Upper lobe of right lung (tissue), 1 donor: ENCODE measurements at regions of chr20 and their contacts with region 1.

Region 1: DNA sequence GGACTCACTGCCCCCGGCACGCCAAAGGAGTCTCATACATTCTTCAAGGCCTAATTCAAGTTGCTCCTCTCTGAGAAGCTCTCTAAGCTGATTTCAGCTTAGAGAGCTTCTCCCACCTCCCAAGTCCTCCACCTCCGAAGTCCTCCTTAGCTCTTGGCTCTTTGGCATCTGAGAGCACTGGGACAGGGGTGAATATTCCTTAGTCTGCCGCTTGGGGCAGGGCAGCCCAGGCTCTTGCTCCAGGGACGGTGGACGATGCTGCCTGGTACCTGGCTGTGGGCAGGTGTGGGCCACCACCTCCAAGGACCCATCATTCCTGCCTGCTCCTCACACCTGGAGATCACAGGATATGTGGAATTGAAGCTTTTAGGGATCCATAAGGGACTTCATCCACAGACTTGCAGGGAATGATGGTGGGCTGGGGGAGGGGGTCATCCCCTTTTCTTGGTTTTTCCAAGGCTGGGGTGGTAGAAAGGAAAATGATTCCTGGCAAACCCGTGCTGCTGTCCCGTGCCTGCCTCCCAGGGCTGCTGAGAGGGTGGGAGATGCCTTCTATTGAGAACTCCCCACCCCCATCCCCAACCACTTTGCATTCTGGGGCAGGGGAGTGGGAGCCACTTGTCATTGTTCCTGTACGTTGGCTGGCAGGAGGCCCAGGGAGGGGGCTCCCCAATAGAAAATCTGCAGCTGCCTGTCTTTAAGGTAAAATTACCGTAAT is 57.4 kb downstream of the ARHGAP40 start:
- DNase-seq: no peak
- ATAC-seq: peak; percentile 73
- H3K4me3 ChIP-seq: no peak overlapping the region
- H3K27ac ChIP-seq: no peak overlapping the region
- H3K4me1 ChIP-seq: no peaks in the 10 kb centered on the region
- H3K27me3 ChIP-seq: peaks cover 41% of the 10 kb centered on the region
- CTCF ChIP-seq: peak; percentile 54

Region 2: DNA sequence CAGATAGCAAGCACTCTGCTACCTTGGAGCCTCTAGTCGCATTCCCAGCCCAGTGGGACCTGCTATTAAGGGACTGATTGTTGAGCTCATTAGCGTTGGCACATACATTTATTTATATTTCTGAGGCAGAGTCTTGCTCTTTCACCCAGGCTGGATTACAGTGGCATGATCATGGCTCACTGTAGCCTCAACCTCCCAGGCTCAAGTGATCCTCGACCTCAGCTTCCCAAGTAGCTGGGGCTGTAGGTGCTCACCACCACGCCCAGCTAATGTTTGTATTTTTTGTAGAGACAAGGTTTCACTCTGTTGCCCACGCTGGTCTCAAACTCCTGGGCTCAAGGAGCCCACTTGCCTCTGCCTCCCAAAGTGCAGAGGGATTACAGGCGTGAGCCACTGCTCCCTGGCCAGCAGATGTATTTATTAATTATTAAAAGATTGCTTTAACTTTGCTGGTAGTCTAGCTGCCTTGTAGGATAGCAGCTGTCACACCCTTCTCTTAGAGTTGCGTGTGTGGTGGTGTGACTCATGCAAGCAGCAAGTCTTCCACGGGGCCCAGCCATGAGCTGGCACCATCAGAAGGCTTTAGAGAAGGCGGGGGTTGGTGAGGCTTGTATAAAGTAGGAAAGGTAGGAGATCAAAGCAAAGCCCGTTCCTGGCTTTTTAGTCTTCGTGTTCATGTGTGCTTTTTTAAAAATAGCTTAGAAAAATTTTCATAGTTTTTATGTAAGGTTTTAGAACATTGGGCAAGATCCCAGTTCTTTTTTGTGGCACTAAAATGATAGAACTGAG is 105.7 kb after region 1 on chr20:
- intact Hi-C with region 1: no loop called
- DNase-seq: no peak
- ATAC-seq: no peak
- H3K4me3 ChIP-seq: no peak overlapping the region
- H3K27ac ChIP-seq: no peak overlapping the region
- H3K4me1 ChIP-seq: no peaks in the 10 kb centered on the region
- H3K27me3 ChIP-seq: no peaks in the 10 kb centered on the region
- CTCF ChIP-seq: no peak

Region 3: GRCh38 chr20:38893565-38894090 is 234.6 kb after region 1 on chr20:
- intact Hi-C with region 1: loop called (anchors 10 kb)
- DNase-seq: peak; percentile 83
- ATAC-seq: peak; percentile 85
- H3K4me3 ChIP-seq: no peak overlapping the region
- H3K27ac ChIP-seq: peak overlapping the region; percentile 42
- H3K4me1 ChIP-seq: no peaks in the 10 kb centered on the region
- H3K27me3 ChIP-seq: peaks cover 5% of the 10 kb centered on the region
- CTCF ChIP-seq: peak; percentile 93